SK-N-SH (cell line): ENCODE measurements at regions of chr10 and their contacts with region 1.

Region 1: DNA sequence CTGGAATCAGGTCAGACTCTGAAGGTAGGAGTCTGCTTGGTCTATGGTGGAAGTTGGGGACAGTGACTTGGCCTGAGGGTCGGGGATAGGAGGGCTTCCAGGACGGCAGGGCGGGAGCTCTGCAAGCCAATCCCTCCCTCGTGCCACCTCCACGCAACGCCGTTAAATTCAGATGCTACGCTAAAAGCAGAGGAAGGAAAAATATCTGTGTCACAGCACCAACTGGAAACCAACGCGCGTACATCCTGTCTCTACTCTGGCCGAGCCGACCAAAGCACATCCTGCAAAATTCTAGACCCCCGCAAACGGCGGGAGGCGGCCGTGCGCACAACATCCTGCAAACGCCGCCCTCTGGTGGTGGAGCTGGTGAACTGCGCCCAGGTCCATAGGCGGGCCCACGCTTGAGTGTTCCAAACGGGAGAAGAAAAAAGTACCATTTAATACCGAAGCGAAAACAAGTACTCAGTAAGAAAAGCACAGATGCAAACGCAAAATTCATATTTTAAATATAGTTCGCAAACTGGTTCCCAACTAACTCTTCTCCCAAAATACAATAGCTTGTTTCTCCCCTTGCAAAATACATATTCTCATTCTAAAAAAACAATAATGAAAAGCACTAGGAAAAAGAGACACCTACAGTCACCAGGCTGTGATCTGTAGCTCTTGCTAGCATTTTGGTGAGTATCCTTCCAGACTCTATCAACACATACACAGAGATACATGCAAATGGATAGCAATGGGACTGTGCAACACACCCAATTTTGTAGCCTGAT is 45.7 kb upstream of the HSPA12A start:
- DNase-seq: peak; percentile 88
- H3K4me3 ChIP-seq: peak overlapping the region; percentile 29 to 53; a peak in 2 of 4 replicates
- H3K27ac ChIP-seq: no peak overlapping the region
- H3K4me1 ChIP-seq: peaks cover 0 to 3% of the 10 kb centered on the region in 2 experiments; a peak in 1 of 4 replicates
- H3K27me3 ChIP-seq: no peaks in the 10 kb centered on the region
- CTCF ChIP-seq: peak; percentile 99
- EP300 ChIP-seq: no peak
- RAD21 ChIP-seq: peak; percentile 87

Region 2: GRCh38 chr10:116637830-116638229 is 150.2 kb before region 1 on chr10:
- CTCF ChIA-PET with region 1: interaction called, 142 read pairs
- POLR2A ChIA-PET with region 1: no interaction called
- DNase-seq: no peak
- H3K4me3 ChIP-seq: no peak overlapping the region
- H3K27ac ChIP-seq: no peak overlapping the region
- H3K4me1 ChIP-seq: no peaks in the 10 kb centered on the region
- H3K27me3 ChIP-seq: no peaks in the 10 kb centered on the region; the same call in 1 of the 2 replicates
- CTCF ChIP-seq: no peak
- EP300 ChIP-seq: no peak
- RAD21 ChIP-seq: no peak

Region 3: GRCh38 chr10:116671274-116671926 is 116.7 kb before region 1 on chr10:
- CTCF ChIA-PET with region 1: interaction called, 46 read pairs
- POLR2A ChIA-PET with region 1: no interaction called
- DNase-seq: no peak
- H3K4me3 ChIP-seq: no peak overlapping the region
- H3K27ac ChIP-seq: no peak overlapping the region
- H3K4me1 ChIP-seq: peaks cover 4 to 11% of the 10 kb centered on the region in 2 experiments; a peak in 2 of 4 replicates
- H3K27me3 ChIP-seq: no peaks in the 10 kb centered on the region
- CTCF ChIP-seq: no peak
- EP300 ChIP-seq: no peak
- RAD21 ChIP-seq: no peak

Region 4: DNA sequence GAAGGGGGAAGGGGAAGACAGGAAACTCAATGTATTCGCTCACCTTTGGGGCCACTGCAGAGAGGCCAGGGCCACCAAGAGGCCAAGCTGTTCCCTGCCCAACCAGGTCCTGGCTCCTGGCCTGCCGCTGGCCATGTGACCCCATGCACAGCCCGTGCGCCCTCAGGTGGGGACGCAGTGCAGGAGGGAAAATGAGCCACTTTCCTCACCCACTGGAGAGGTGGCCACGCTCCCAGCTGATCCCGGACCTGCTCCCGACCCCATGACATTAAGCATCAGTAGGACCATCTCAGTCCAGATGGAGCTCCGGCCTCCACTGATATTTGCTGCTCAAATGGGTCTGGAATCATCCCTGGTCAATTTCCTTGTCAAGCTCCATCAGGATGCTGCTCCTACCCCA is 85.9 kb before region 1 on chr10:
- CTCF ChIA-PET with region 1: interaction called, 18 read pairs
- POLR2A ChIA-PET with region 1: no interaction called
- DNase-seq: no peak
- H3K4me3 ChIP-seq: no peak overlapping the region
- H3K27ac ChIP-seq: no peak overlapping the region
- H3K4me1 ChIP-seq: peaks cover 0 to 36% of the 10 kb centered on the region in 2 experiments; a peak in 1 of 4 replicates
- H3K27me3 ChIP-seq: no peaks in the 10 kb centered on the region
- CTCF ChIP-seq: no peak
- EP300 ChIP-seq: no peak
- RAD21 ChIP-seq: no peak

Region 5: DNA sequence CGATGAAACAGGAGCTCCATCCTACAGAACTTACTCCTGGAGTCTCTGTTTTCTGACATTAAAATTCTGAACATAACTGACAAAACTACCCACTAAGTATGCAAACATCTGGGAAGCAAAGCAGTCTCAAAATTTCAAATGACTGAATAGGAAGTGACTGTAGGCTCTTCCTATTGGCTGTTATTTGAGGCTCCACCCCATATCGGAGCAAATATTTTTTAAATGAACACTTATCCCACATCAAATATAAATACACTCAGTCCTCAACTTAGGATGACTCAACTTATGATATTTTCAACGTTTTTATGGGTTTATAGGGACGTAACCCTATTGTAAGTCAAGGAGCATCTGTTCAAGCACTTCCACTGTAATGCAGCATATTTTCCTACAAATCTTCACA is 54.5 kb before region 1 on chr10:
- CTCF ChIA-PET with region 1: interaction called, 12 read pairs
- POLR2A ChIA-PET with region 1: no interaction called
- DNase-seq: no peak
- H3K4me3 ChIP-seq: no peak overlapping the region
- H3K27ac ChIP-seq: peak overlapping the region in 1 of 2 experiments; percentile 50; a peak in 2 of 4 replicates
- H3K4me1 ChIP-seq: peaks cover 0 to 27% of the 10 kb centered on the region in 2 experiments; a peak in 2 of 4 replicates
- H3K27me3 ChIP-seq: no peaks in the 10 kb centered on the region
- CTCF ChIP-seq: no peak
- EP300 ChIP-seq: no peak
- RAD21 ChIP-seq: no peak

Region 6: GRCh38 chr10:116771101-116771958 is 16.7 kb before region 1 on chr10:
- CTCF ChIA-PET with region 1: interaction called, 106 read pairs
- POLR2A ChIA-PET with region 1: interaction called, 4 read pairs
- DNase-seq: no peak
- H3K4me3 ChIP-seq: no peak overlapping the region
- H3K27ac ChIP-seq: peak overlapping the region in 1 of 2 experiments; percentile 47; a peak in 2 of 4 replicates
- H3K4me1 ChIP-seq: peaks cover 0 to 12% of the 10 kb centered on the region in 2 experiments; a peak in 1 of 4 replicates
- H3K27me3 ChIP-seq: no peaks in the 10 kb centered on the region
- CTCF ChIP-seq: no peak
- EP300 ChIP-seq: peak in 1 of 2 experiments; percentile 41; a peak in 1 of 4 replicates
- RAD21 ChIP-seq: no peak

Region 7: DNA sequence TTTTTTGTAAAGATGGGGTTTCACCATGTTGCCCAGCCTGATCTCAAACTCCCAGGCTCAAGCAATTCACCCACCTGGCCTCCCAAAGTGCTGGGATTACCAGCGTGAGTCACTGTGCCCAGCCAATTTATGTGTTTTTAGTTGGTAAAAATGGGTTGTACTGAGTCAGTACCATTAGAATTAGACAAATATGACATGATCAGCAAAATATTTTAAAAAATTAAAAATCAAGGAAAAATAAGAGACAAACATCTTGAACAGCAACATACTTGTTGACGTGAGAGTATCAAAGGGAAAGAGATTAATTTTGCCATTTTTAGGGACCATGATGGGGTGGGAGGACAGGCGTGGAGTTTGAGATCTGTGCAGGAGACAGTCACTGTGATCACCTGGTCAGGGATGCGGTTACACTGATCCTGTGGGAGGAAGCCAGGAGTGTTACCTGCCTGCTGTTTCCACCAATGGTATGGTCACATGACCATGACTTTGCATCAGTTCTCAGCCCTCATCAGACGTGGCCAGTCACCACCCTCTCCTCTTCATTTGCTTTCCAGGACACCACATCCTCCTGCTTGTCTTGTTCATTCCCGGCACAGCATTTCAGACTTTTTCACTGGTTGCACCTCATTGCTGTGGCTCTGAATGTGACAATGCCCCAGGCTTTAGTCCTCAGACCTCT is 32.1 kb after region 1 on chr10:
- CTCF ChIA-PET with region 1: no interaction called
- POLR2A ChIA-PET with region 1: no interaction called
- DNase-seq: no peak
- H3K4me3 ChIP-seq: no peak overlapping the region
- H3K27ac ChIP-seq: no peak overlapping the region
- H3K4me1 ChIP-seq: no peaks in the 10 kb centered on the region
- H3K27me3 ChIP-seq: no peaks in the 10 kb centered on the region
- CTCF ChIP-seq: no peak
- EP300 ChIP-seq: no peak
- RAD21 ChIP-seq: no peak

Region 8: GRCh38 chr10:116960066-116960776 is 172.1 kb after region 1 on chr10:
- CTCF ChIA-PET with region 1: no interaction called
- POLR2A ChIA-PET with region 1: no interaction called
- DNase-seq: no peak
- H3K4me3 ChIP-seq: no peak overlapping the region
- H3K27ac ChIP-seq: no peak overlapping the region
- H3K4me1 ChIP-seq: peaks cover 7 to 8% of the 10 kb centered on the region in 2 experiments; a peak in 3 of 4 replicates
- H3K27me3 ChIP-seq: no peaks in the 10 kb centered on the region
- CTCF ChIP-seq: no peak
- EP300 ChIP-seq: no peak
- RAD21 ChIP-seq: no peak

Region 9: GRCh38 chr10:117074621-117075020 is 286.5 kb after region 1 on chr10:
- CTCF ChIA-PET with region 1: no interaction called
- POLR2A ChIA-PET with region 1: no interaction called
- DNase-seq: no peak
- H3K4me3 ChIP-seq: no peak overlapping the region
- H3K27ac ChIP-seq: no peak overlapping the region
- H3K4me1 ChIP-seq: no peaks in the 10 kb centered on the region
- H3K27me3 ChIP-seq: no peaks in the 10 kb centered on the region
- CTCF ChIP-seq: 0 out of 2 replicates have a peak, but pooled peaks have one; percentile 19
- EP300 ChIP-seq: no peak
- RAD21 ChIP-seq: peak; percentile 33

Region 10: GRCh38 chr10:117174439-117175214 is 386.5 kb after region 1 on chr10:
- CTCF ChIA-PET with region 1: interaction called, 226 read pairs
- POLR2A ChIA-PET with region 1: no interaction called
- DNase-seq: peak; percentile 84
- H3K4me3 ChIP-seq: peak overlapping the region; percentile 52 to 64
- H3K27ac ChIP-seq: no peak overlapping the region
- H3K4me1 ChIP-seq: peaks cover 0 to 9% of the 10 kb centered on the region in 2 experiments; a peak in 1 of 4 replicates
- H3K27me3 ChIP-seq: peaks cover 37% of the 10 kb centered on the region
- CTCF ChIP-seq: peak; percentile 89
- EP300 ChIP-seq: no peak
- RAD21 ChIP-seq: peak; percentile 85

Region 11: DNA sequence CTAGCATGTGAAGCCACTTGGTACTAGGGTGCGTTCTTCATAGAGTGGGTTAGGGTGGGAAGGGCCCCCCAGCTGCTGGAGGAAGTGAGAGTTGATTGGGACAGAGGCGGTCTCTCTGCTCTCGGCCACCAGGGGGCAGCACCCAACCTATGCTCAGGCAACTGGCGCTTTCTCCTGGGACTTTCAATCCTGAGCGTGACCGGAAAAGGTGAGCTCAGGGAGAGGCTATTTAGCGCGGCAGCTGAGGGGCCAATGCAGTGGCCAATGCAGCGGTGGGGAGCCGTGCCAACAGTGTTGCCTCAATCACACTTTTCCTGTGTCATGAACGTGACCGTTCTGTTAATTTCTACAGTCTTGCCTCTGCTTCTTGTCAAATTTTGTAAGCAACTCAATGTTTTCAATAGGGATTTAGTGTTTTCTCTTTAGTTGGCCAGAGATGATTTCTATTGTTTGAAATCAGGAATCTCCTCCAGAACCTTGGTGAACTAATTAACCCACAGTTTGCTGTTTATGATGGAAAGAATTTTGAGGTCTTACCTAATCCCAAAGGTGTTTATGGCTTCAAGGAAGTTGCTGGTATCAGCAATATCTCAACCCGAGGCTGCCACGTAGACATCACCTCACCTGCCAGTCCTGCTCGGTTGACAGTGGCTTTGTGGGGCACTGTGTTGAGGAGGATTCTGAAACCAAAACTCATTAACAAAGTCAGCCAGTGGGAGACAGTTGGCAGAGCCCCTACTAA is 655.0 kb after region 1 on chr10:
- CTCF ChIA-PET with region 1: no interaction called
- POLR2A ChIA-PET with region 1: no interaction called
- DNase-seq: peak; percentile 76
- H3K4me3 ChIP-seq: no peak overlapping the region; a peak in 1 of 4 replicates
- H3K27ac ChIP-seq: no peak overlapping the region
- H3K4me1 ChIP-seq: no peaks in the 10 kb centered on the region; a peak in 1 of 4 replicates
- H3K27me3 ChIP-seq: no peaks in the 10 kb centered on the region
- CTCF ChIP-seq: peak; percentile 64
- EP300 ChIP-seq: no peak
- RAD21 ChIP-seq: peak; percentile 59